Activated B cell treated with CpG ODN at 0.5 μM for 24 hours (primary cell): ENCODE measurements at regions of chr1 and their contacts with region 1.

Region 1: GRCh38 chr1:116504308-116505156 is 66.3 kb downstream of the CD58 start:
- DNase-seq: peak; percentile 64
- ATAC-seq: peak; percentile 95
- H3K4me3 Mint-ChIP-seq: peak overlapping the region; percentile 53
- H3K27ac Mint-ChIP-seq: peak overlapping the region; percentile 83
- H3K4me1 Mint-ChIP-seq: peaks cover 63% of the 10 kb centered on the region
- H3K27me3 Mint-ChIP-seq: no peaks in the 10 kb centered on the region
- CTCF ChIP-seq: no peak

Region 2: GRCh38 chr1:116372587-116373444 is 131.7 kb before region 1 on chr1 and contains the start of gene ATP1A1:
- CTCF ChIA-PET with region 1: interaction called, 5 read pairs
- POLR2A ChIA-PET with region 1: interaction called, 8 read pairs
- intact Hi-C with region 1: loop called (anchors 1 kb)
- DNase-seq: peak; percentile 99
- ATAC-seq: peak; percentile 75
- H3K4me3 Mint-ChIP-seq: peak within 1 kb of the TSS; percentile 91
- H3K27ac Mint-ChIP-seq: peak within 1 kb of the TSS; percentile 94
- H3K4me1 Mint-ChIP-seq: peaks cover 38% of the 10 kb centered on the region
- H3K27me3 Mint-ChIP-seq: peaks cover 2% of the 10 kb centered on the region
- CTCF ChIP-seq: no peak
- total RNA-seq, gene ATP1A1: 139 and 151 TPM in 2 replicates

Region 3: DNA sequence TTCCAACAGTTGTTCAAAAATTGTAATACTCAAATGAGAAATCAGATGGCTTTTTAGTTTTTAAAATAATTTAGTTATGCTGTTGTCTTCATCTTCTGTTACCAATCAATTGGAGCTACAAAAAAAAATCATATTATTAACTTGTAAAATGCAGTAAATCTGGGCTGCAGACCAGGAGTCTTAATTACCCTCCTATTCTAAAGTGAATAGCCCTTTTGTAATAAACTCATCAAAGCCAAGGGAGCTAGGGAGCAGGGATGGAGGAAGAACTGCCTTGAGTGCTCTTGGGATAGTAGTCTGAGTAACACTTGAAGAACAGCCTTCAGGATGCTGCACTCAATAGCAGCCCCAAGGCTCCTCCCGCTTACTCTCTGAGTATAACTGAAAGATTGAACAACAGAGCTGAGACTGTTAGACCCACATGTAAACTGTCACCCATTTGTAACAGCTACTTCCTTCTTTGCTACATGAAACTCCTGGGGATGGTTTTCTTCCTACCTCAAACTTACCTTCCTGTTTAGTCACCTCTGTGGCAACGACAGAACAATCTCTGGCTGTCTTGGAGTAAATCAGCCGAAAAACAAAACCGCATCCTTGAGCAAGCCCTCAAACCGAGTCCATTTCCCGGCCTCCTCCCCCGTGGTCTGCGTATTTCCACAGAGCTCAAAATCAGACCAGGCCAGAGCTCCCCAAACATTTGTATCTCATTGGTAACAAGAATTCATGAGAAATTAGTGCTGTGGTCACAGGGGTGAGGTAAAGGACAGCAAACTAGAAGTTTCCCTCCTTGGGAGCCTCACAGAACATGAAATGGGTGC is 10.4 kb after region 1 on chr1:
- CTCF ChIA-PET with region 1: interaction called, 9 read pairs
- POLR2A ChIA-PET with region 1: interaction called, 52 read pairs
- intact Hi-C with region 1: loop called (anchors 1 kb)
- DNase-seq: no peak
- ATAC-seq: peak; percentile 76
- H3K4me3 Mint-ChIP-seq: peak overlapping the region; percentile 56
- H3K27ac Mint-ChIP-seq: peak overlapping the region; percentile 92
- H3K4me1 Mint-ChIP-seq: peaks cover 59% of the 10 kb centered on the region
- H3K27me3 Mint-ChIP-seq: no peaks in the 10 kb centered on the region
- CTCF ChIP-seq: no peak

Region 4: GRCh38 chr1:116556289-116557006 is 51.9 kb after region 1 on chr1:
- CTCF ChIA-PET with region 1: interaction called, 6 read pairs
- POLR2A ChIA-PET with region 1: interaction called, 42 read pairs
- intact Hi-C with region 1: loop called (anchors 1 kb)
- DNase-seq: no peak
- ATAC-seq: peak; percentile 76
- H3K4me3 Mint-ChIP-seq: peak overlapping the region; percentile 65
- H3K27ac Mint-ChIP-seq: peak overlapping the region; percentile 99
- H3K4me1 Mint-ChIP-seq: peaks cover 90% of the 10 kb centered on the region
- H3K27me3 Mint-ChIP-seq: no peaks in the 10 kb centered on the region
- CTCF ChIP-seq: no peak

Region 5: DNA sequence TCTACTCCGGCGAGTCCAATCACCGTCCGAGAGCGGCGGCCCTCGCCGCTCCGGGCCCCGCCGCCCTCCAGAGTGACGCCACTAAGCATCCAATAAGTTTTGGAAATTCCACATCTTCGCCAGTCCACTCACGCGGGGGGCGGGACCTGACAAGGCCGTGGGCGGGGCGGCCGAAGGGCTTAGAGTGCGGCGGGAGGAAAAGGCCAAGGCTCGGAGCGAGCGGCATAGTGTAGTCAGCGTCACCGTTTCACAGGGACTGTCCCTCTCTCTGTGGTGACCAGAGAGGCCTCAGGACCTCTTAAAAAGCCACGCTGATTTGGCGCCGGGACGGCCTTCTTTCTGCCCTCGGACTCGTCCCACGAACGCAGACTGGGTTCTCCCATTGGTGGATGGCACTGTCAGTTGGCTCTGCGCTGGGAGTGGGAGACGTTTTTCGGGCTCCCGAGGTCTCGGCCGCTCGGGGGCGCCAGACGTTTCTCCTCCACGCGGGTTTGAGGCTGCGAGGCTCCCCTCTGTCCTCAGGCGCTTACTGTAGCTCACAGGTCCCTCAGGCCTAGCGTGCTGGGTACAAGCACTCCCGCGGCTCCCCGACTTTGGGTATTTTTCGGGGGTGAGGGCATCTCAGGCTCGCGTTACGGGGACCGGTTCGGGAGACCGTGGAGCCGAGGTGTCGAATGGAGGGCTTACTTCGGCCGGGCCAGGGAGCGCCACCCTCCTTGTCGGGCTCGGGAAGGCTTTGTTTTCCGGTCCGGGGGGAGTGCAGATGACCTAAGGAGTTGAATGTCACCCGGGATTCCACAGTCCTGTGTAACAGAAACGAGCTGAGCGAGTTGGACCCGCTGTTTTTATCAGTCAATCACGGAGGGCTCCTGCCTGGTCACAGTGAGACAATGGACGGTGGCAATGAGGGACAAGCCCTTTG is 617.5 kb after region 1 on chr1:
- CTCF ChIA-PET with region 1: no interaction called
- POLR2A ChIA-PET with region 1: no interaction called
- intact Hi-C with region 1: loop called (anchors 5 kb)
- DNase-seq: peak; percentile 76
- ATAC-seq: peak; percentile 88
- H3K4me3 Mint-ChIP-seq: peak overlapping the region; percentile 88
- H3K27ac Mint-ChIP-seq: peak overlapping the region; percentile 54
- H3K4me1 Mint-ChIP-seq: peaks cover 13% of the 10 kb centered on the region
- H3K27me3 Mint-ChIP-seq: peaks cover 2% of the 10 kb centered on the region
- CTCF ChIP-seq: no peak